ENCODE measurements at regions of chr5 and their contacts with region 1.

Region 1: DNA sequence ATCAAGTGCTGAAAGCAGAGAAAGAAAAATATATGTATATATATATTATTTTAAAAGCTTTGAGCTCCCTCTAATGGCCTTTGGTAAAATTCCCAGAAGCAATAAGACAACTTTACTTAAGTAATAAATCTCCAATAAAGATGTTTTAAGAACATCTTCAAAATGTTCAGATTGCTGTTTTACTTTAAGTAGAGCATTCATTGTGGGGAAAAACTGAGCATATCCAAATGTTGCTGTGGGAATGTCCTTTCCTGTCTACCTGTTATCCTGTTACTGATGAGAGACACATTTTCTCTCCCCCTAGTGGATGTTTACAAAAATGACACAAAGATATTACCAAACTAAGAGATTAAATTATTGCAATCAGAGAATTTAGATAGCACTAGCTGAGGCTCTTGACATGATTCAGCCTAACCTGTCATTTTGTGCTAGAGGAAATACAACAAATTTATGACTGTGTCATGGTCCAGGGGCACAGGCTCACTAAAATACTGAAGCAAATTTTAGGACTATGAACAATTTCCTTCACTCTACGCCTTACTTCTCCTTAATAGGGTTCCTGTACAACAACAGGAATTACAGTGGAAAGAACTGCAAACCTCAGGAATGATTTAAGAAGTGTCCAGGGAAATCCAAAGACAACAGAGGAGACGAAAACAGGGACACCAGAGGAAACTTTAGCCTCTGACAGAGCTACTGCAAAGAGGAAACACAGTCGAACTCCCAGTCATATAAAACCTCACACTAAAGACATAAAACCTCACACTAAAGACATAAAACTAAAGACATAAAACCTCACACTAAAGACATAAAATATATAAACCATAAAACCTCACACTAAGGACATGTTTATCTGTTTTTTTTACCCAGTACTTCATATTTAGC is 24.3 kb upstream of the PRRC1 start:
- DNase-seq: no peak
- H3K4me3 ChIP-seq: no peak overlapping the region
- H3K27ac ChIP-seq: no peak overlapping the region
- H3K4me1 ChIP-seq: no peaks in the 10 kb centered on the region
- H3K27me3 ChIP-seq: no peaks in the 10 kb centered on the region
- CTCF ChIP-seq: peak in 2 of 3 experiments; percentile 44 to 72; a peak in 3 of 4 replicates
- EP300 ChIP-seq: no peak
- POLR2A ChIP-seq: no peak
- RAD21 ChIP-seq: peak; percentile 41 to 42; a peak in 3 of 4 replicates

Region 2: DNA sequence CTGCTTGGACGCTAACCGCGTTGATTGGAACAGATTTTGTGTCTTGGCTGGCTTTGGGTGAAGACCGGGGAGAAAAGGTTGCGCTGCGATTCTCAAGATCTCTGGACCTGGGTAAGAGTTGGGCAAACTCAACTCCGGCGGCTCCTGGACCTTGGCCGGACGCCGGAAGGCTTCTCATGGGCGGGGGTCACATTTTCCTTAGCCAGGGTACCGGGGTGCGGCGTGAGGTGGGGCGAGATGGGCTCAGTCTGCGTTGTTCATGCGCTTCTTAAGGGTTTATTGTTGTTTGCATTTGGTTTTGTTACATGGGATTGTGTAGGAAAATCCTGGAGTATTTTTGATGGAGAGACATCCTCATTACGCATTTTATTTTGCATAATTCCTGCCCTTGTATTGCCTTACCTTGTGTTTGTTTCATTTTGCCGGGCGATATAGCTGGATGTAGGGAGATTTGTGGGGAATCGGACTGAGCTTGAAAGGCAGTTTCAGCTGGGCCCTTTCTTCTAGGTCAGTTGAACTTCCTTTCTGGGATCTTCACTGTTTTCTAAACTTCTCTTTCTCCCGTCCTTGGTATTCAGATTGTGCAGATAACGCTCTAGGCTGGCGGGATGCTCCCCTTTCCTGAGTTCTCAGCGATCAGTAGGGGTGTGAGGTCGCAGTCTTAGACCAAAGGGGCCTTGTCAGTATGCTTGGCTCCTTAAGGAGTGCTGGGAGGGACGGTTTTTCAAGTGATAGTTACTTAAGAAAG is 202.0 kb before region 1 on chr5:
- CTCF ChIA-PET with region 1: interaction called, 17 read pairs
- POLR2A ChIA-PET with region 1: no interaction called
- DNase-seq: no peak
- H3K4me3 ChIP-seq: peak overlapping the region; percentile 61 to 95 (median 92)
- H3K27ac ChIP-seq: no peak overlapping the region; the same call in 1 of the 2 replicates
- H3K4me1 ChIP-seq: peaks cover 1 to 21% (median 11%) of the 10 kb centered on the region in 4 experiments; a peak in 5 of 7 replicates
- H3K27me3 ChIP-seq: no peaks in the 10 kb centered on the region
- CTCF ChIP-seq: no peak
- EP300 ChIP-seq: no peak
- POLR2A ChIP-seq: no peak
- RAD21 ChIP-seq: no peak

Region 3: DNA sequence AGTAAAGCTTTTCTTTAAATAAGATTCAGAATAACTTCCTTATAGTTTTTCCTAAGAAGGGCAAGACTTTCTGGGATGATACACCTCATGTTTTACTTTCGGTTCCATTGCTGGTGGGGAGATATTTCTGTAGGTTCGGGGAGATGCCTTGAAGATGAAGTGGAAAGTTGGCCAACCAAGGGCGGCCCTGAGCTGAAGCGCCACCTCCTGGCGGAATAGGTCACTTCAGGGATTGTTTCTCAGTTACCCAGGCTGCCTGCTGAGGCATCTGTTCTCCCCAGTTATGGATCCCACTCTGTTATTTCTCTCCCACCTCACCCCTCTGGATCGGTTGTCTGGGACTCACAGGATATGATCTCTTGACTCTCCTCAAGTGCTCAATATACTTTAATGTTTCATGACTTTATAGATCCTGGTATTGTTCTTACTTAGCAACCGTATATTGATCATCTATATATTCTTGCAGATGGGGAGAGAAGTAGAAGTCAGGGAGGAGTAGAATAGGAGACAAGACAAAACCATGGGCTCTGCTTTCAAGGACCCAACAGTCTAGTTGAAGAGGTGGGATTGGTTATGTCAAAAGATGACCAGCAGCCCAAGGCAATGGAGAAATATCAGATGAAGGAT is 179.1 kb before region 1 on chr5:
- CTCF ChIA-PET with region 1: interaction called, 12 read pairs
- POLR2A ChIA-PET with region 1: no interaction called
- DNase-seq: peak in 1 of 2 experiments; percentile 89
- H3K4me3 ChIP-seq: no peak overlapping the region
- H3K27ac ChIP-seq: no peak overlapping the region
- H3K4me1 ChIP-seq: peaks cover 0 to 12% (median 6%) of the 10 kb centered on the region in 4 experiments; a peak in 5 of 7 replicates
- H3K27me3 ChIP-seq: no peaks in the 10 kb centered on the region
- CTCF ChIP-seq: peak; percentile 76 to 90 (median 87)
- EP300 ChIP-seq: 0 out of 3 replicates have a peak, but pooled peaks of 1 of the 2 experiments have one; percentile 25
- POLR2A ChIP-seq: no peak
- RAD21 ChIP-seq: peak; percentile 69 to 78

Region 4: DNA sequence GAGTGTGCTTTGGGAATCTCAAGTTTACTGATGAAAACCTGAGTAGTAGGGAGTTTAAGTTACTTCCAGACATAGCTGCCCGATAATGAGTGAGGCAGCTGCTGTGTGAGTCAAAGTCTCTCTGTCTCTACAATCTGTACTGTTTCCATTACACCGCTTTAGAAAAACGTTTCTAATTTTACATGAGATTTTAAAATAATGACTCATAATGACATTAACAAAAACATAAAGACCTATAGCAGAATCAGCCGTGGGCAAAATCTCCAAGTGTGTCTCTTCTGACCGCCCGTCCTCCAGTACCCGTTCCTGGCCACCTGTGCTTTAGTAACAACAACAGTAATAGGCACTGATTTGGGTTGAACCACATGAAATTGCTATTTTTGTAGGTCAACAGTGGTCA is 45.3 kb before region 1 on chr5:
- CTCF ChIA-PET with region 1: interaction called, 10 read pairs
- POLR2A ChIA-PET with region 1: no interaction called
- DNase-seq: no peak
- H3K4me3 ChIP-seq: no peak overlapping the region
- H3K27ac ChIP-seq: no peak overlapping the region
- H3K4me1 ChIP-seq: no peaks in the 10 kb centered on the region
- H3K27me3 ChIP-seq: no peaks in the 10 kb centered on the region
- CTCF ChIP-seq: no peak
- EP300 ChIP-seq: no peak
- POLR2A ChIP-seq: no peak
- RAD21 ChIP-seq: no peak

Region 5: DNA sequence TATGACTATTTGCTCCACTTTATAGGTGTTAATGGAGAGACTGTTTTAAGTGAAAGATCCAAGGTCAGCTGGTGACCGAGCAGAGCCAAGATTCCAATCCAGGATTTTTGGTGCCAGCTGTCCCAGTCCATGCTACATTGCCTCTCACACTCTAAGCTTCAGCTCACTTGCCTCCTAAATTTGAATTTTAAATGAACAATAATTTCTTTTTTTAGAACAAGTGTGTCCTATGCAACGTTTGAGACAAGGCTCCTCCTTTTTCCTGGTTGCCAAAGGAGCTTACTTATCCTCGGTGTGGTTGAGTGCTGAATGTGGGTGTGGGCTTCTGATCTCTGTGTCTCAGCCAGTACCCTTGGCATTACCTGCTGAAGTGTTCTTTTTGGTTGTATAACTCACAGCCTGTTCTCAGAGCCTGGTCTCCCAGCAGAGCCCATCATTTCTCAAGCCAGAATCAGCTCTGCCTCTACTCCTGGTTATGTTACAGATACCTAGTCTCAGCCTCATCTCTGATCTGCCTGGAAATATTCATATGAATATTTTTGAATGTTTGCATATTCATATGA is 20.4 kb after region 1 on chr5:
- CTCF ChIA-PET with region 1: interaction called, 38 read pairs
- POLR2A ChIA-PET with region 1: interaction called, 3 read pairs
- DNase-seq: no peak
- H3K4me3 ChIP-seq: no peak overlapping the region
- H3K27ac ChIP-seq: no peak overlapping the region
- H3K4me1 ChIP-seq: no peaks in the 10 kb centered on the region
- H3K27me3 ChIP-seq: no peaks in the 10 kb centered on the region
- CTCF ChIP-seq: no peak
- EP300 ChIP-seq: no peak
- POLR2A ChIP-seq: no peak
- RAD21 ChIP-seq: no peak

Region 6: GRCh38 chr5:127705120-127705892 is 212.2 kb after region 1 on chr5:
- CTCF ChIA-PET with region 1: no interaction called
- POLR2A ChIA-PET with region 1: no interaction called
- DNase-seq: no peak
- H3K4me3 ChIP-seq: no peak overlapping the region
- H3K27ac ChIP-seq: no peak overlapping the region
- H3K4me1 ChIP-seq: no peaks in the 10 kb centered on the region
- H3K27me3 ChIP-seq: peaks cover 0 to 1% (median 0%) of the 10 kb centered on the region in 4 experiments; a peak in 1 of 7 replicates
- CTCF ChIP-seq: no peak
- EP300 ChIP-seq: no peak
- POLR2A ChIP-seq: no peak
- RAD21 ChIP-seq: no peak